IMR-90 (cell line): ENCODE measurements at regions of chr7 and their contacts with region 1.

Region 1: GRCh38 chr7:112806156-112806555 is 16.0 kb upstream of the TMEM168 start:
- DNase-seq: no peak
- ATAC-seq: no peak
- H3K4me3 ChIP-seq: no peak overlapping the region
- H3K27ac ChIP-seq: no peak overlapping the region
- H3K4me1 ChIP-seq: no peaks in the 10 kb centered on the region
- H3K27me3 ChIP-seq: no peaks in the 10 kb centered on the region
- CTCF ChIP-seq: no peak
- POLR2A ChIP-seq: no peak
- RAD21 ChIP-seq: no peak

Region 2: DNA sequence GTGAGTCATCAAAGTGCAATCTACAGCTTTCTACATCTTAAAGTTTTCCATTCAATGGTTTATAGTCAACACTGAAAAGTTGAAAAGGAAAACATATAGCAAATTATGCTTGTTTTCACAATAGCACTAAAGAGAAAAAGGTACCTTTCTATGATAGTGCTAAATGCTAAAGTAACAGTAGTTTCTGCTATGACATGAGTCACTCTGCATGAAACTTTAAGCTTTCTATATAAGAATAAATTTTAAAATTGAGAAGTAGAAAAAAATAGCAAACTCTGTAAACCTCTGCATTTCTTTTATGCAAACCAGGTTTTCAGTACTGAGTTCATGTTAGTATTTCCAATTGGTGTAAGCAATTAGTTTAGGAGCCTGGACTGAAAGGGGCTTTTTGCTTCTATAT is 15.2 kb after region 1 on chr7:
- CTCF ChIA-PET with region 1: no interaction called
- POLR2A ChIA-PET with region 1: interaction called, 12 read pairs
- dilution Hi-C with region 1: no loop called
- in situ Hi-C with region 1: no loop called
- intact Hi-C with region 1: no loop called
- DNase-seq: no peak
- ATAC-seq: no peak
- H3K4me3 ChIP-seq: no peak overlapping the region
- H3K27ac ChIP-seq: no peak overlapping the region
- H3K4me1 ChIP-seq: no peaks in the 10 kb centered on the region
- H3K27me3 ChIP-seq: no peaks in the 10 kb centered on the region
- CTCF ChIP-seq: no peak
- POLR2A ChIP-seq: no peak
- RAD21 ChIP-seq: no peak

Region 3: GRCh38 chr7:112853422-112853821 is 47.3 kb after region 1 on chr7:
- CTCF ChIA-PET with region 1: no interaction called
- POLR2A ChIA-PET with region 1: no interaction called
- dilution Hi-C with region 1: no loop called
- in situ Hi-C with region 1: no loop called
- intact Hi-C with region 1: no loop called
- DNase-seq: no peak
- ATAC-seq: peak; percentile 49
- H3K4me3 ChIP-seq: no peak overlapping the region
- H3K27ac ChIP-seq: no peak overlapping the region
- H3K4me1 ChIP-seq: no peaks in the 10 kb centered on the region
- H3K27me3 ChIP-seq: no peaks in the 10 kb centered on the region
- CTCF ChIP-seq: no peak
- POLR2A ChIP-seq: no peak
- RAD21 ChIP-seq: no peak